T-cell (primary cell): ENCODE measurements at regions of chr6 and their contacts with region 1.

Region 1: GRCh38 chr6:152143359-152143758 is 335.9 kb downstream of the ESR1 start:
- DNase-seq: no peak
- ATAC-seq: no peak
- H3K4me3 ChIP-seq: no peak overlapping the region
- H3K4me3 Mint-ChIP-seq: no peak overlapping the region
- H3K27ac ChIP-seq: no peak overlapping the region
- H3K27ac Mint-ChIP-seq: no peak overlapping the region
- H3K4me1 ChIP-seq: no peaks in the 10 kb centered on the region
- H3K4me1 Mint-ChIP-seq: peaks cover 0 to 5% (median 3%) of the 10 kb centered on the region in 3 donors
- H3K27me3 ChIP-seq: no peaks in the 10 kb centered on the region
- H3K27me3 Mint-ChIP-seq: no peaks in the 10 kb centered on the region

Region 2: GRCh38 chr6:152267967-152268845 is 124.8 kb after region 1 on chr6:
- CTCF ChIA-PET with region 1: no interaction called
- POLR2A ChIA-PET with region 1: interaction called in 1 of 2 experiments, 10 read pairs
- DNase-seq: peak in 9 of 35 experiments; percentile 2 to 53 (median 6)
- ATAC-seq: no peak
- H3K4me3 ChIP-seq: no peak overlapping the region
- H3K4me3 Mint-ChIP-seq: no peak overlapping the region
- H3K27ac ChIP-seq: no peak overlapping the region
- H3K27ac Mint-ChIP-seq: no peak overlapping the region
- H3K4me1 ChIP-seq: no peaks in the 10 kb centered on the region
- H3K4me1 Mint-ChIP-seq: peaks cover 0 to 5% (median 0%) of the 10 kb centered on the region in 3 donors
- H3K27me3 ChIP-seq: no peaks in the 10 kb centered on the region
- H3K27me3 Mint-ChIP-seq: no peaks in the 10 kb centered on the region